ENCODE measurements at regions of chr17 and their contacts with region 1.

Region 1: GRCh38 chr17:73311781-73312641 is at the start of gene CDC42EP4:
- DNase-seq: peak; percentile 93
- ATAC-seq: peak; percentile 95
- H3K4me3 Mint-ChIP-seq: peak within 1 kb of the TSS; percentile 80
- H3K27ac Mint-ChIP-seq: no peak within 1 kb of the TSS
- H3K4me1 Mint-ChIP-seq: peaks cover 10% of the 10 kb centered on the region
- H3K27me3 Mint-ChIP-seq: peaks cover 2% of the 10 kb centered on the region
- total RNA-seq, gene CDC42EP4: 0.87 to 0.91 TPM

Region 2: DNA sequence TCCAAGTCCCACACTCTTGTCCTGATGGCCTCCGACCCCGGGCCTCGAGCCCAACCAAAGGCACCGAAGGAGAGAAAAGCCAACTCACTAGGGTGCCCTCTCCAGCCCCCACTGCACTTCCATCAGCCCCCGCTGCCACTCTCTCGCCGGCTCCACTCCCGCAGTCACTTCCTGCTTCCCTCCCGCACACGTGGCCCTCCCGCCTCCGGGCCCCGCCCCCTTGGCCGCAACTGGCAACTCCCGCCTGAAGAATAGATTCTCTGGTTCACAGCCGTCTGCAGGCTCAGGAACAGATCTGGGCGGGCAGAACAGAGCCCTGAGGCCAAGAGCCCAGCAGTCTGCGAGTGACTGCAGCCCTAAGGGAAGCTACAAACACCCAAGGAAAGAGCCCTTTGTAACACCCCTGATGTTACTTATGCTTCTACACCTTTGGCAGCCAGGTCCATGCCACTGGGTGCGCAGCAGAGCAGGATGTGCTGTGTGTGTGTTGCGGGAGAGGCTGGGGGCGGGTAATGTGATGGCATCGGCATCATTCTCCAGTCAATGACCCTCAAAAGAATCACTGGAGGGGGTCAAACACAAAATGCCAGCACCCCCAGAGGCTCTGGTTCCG is 219.4 kb before region 1 on chr17 and contains the start of gene SLC39A11:
- CTCF ChIA-PET with region 1: no interaction called
- POLR2A ChIA-PET with region 1: no interaction called
- intact Hi-C with region 1: loop called in 1 of 2 experiments (anchors 1 kb)
- DNase-seq: peak; percentile 95
- ATAC-seq: peak; percentile 99
- H3K4me3 Mint-ChIP-seq: peak within 1 kb of the TSS; percentile 94
- H3K27ac Mint-ChIP-seq: peak within 1 kb of the TSS; percentile 87
- H3K4me1 Mint-ChIP-seq: peaks cover 24% of the 10 kb centered on the region
- H3K27me3 Mint-ChIP-seq: peaks cover 2% of the 10 kb centered on the region
- total RNA-seq, gene SLC39A11: 12.5 to 17.2 TPM

Region 3: GRCh38 chr17:73118951-73119391 is 193.0 kb before region 1 on chr17:
- CTCF ChIA-PET with region 1: no interaction called
- POLR2A ChIA-PET with region 1: no interaction called
- intact Hi-C with region 1: no loop called
- DNase-seq: no peak
- ATAC-seq: no peak
- H3K4me3 Mint-ChIP-seq: no peak overlapping the region
- H3K27ac Mint-ChIP-seq: no peak overlapping the region
- H3K4me1 Mint-ChIP-seq: no peaks in the 10 kb centered on the region
- H3K27me3 Mint-ChIP-seq: peaks cover 4% of the 10 kb centered on the region

Region 4: DNA sequence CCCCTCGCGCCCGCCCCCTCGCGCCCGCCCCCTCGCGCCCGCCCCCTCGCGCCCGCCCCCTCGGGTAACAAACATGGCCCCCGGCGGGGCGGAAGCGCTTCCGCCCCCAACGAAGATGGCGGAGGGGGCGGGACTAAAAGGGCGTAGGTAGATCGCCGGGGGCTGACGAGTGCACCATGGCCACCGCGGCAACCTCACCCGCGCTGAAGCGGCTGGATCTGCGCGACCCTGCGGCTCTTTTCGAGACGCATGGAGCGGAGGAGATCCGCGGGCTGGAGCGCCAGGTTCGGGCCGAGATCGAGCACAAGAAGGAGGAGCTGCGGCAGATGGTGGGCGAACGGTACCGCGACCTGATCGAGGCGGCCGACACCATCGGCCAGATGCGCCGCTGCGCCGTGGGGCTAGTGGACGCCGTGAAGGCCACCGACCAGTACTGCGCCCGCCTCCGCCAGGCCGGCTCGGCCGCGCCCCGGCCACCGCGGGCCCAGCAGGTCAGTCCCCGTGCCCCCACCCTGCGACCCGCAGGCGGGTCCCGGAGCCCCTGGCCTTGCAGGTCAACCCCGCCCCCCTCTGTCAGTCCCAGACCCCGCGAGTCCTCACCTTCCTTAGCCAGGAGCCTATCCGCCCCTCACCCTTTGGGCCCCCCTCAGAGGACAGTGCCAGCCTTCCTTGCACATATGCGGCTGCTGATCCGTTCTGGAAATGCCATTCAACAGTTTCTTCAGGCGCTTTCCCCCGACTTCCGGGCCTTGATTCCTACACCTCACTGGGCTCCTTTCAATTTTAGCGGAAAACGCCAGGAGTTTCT is 118.9 kb before region 1 on chr17 and contains the start of gene COG1:
- CTCF ChIA-PET with region 1: interaction called, 4 read pairs
- POLR2A ChIA-PET with region 1: no interaction called
- intact Hi-C with region 1: loop called (anchors 1 to 5 kb)
- DNase-seq: peak; percentile 91
- ATAC-seq: peak; percentile 78
- H3K4me3 Mint-ChIP-seq: peak within 1 kb of the TSS; percentile 91
- H3K27ac Mint-ChIP-seq: peak within 1 kb of the TSS; percentile 97
- H3K4me1 Mint-ChIP-seq: peaks cover 18% of the 10 kb centered on the region
- H3K27me3 Mint-ChIP-seq: no peaks in the 10 kb centered on the region
- total RNA-seq, gene COG1: 25.6 to 39.0 TPM

Region 5: GRCh38 chr17:73289641-73290254 is 22.3 kb before region 1 on chr17:
- CTCF ChIA-PET with region 1: no interaction called
- POLR2A ChIA-PET with region 1: no interaction called
- intact Hi-C with region 1: no loop called
- DNase-seq: no peak
- ATAC-seq: no peak
- H3K4me3 Mint-ChIP-seq: no peak overlapping the region
- H3K27ac Mint-ChIP-seq: no peak overlapping the region
- H3K4me1 Mint-ChIP-seq: peaks cover 12% of the 10 kb centered on the region
- H3K27me3 Mint-ChIP-seq: no peaks in the 10 kb centered on the region

Region 6: GRCh38 chr17:73340093-73340596 is 28.1 kb after region 1 on chr17:
- CTCF ChIA-PET with region 1: no interaction called
- POLR2A ChIA-PET with region 1: no interaction called
- intact Hi-C with region 1: loop called in 1 of 2 experiments (anchors 2 kb)
- DNase-seq: peak; percentile 40
- ATAC-seq: peak; percentile 80
- H3K4me3 Mint-ChIP-seq: no peak overlapping the region
- H3K27ac Mint-ChIP-seq: no peak overlapping the region
- H3K4me1 Mint-ChIP-seq: peaks cover 4% of the 10 kb centered on the region
- H3K27me3 Mint-ChIP-seq: no peaks in the 10 kb centered on the region

Region 7: DNA sequence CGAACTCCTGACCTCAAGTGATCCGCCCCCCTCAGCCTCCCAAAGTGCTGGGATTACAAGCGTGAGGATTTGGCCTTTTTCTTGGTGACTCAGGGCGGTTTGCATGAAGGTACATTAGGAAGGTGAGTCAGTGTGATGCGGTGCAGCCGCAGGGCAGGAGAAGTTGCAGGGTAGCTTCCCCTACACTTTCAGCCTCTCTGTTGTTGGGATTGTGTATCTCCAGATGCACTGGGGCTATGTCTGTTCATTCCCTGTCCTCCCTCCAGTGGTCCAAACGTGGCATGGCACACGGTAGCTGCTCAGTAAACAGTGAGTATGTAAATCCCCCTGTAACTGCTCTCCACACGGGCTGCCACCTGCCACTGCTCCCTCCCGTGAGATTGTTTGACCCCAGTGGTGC is 108.9 kb after region 1 on chr17:
- CTCF ChIA-PET with region 1: no interaction called
- POLR2A ChIA-PET with region 1: no interaction called
- intact Hi-C with region 1: no loop called
- DNase-seq: no peak
- ATAC-seq: no peak
- H3K4me3 Mint-ChIP-seq: no peak overlapping the region
- H3K27ac Mint-ChIP-seq: no peak overlapping the region
- H3K4me1 Mint-ChIP-seq: no peaks in the 10 kb centered on the region
- H3K27me3 Mint-ChIP-seq: no peaks in the 10 kb centered on the region

Region 8: DNA sequence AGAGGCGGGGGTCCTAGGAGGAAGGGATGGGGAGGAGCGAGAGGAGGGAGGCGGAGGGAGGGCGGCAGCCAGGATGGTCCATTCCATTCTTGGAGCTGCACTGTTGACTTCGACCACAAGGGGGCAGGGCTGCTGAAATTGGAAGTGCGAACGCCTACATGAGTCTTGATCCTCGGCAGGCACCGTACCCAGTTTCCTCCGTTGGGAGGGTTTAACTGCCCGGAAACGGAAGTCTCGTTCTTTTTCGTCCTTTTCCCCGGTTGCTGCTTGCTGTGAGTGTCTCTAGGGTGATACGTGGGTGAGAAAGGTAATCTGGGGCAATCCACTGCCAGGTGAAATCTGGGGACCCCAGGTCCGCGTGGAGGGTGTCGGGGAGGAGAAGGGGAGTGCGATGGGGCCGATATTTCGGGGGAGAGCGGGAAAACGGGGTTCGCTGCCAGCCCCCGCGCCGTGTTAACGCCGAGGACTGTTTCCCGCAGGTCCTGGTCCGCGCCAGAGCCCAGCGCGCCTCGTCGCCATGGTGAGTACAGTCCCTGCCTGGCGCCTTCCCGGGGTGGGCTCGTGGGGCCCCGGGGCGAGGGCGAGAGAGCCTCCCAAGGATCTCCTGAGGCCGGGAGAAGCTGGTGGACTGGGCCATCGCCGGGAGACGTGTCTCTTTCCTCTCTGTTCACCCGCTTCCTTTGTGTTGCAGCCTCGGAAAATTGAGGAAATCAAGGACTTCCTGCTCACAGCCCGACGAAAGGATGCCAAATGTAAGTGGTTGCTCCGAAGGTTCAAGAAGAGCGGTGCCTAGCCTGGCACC is 891.6 kb after region 1 on chr17 and contains the start of gene RPL38:
- CTCF ChIA-PET with region 1: no interaction called
- POLR2A ChIA-PET with region 1: no interaction called
- intact Hi-C with region 1: loop called in 1 of 2 experiments (anchors 1 kb)
- DNase-seq: peak; percentile 98
- ATAC-seq: peak; percentile 83
- H3K4me3 Mint-ChIP-seq: peak within 1 kb of the TSS; percentile 100
- H3K27ac Mint-ChIP-seq: peak within 1 kb of the TSS; percentile 100
- H3K4me1 Mint-ChIP-seq: peaks cover 44% of the 10 kb centered on the region
- H3K27me3 Mint-ChIP-seq: peaks cover 11% of the 10 kb centered on the region
- total RNA-seq, gene RPL38: 1,648 to 1,818 TPM